RWPE1 (cell line): ENCODE measurements at regions of chr7 and their contacts with region 1.

Region 1: GRCh38 chr7:151123822-151124464 is 37.7 kb downstream of the AGAP3 start:
- DNase-seq: peak; percentile 72
- H3K27ac ChIP-seq: peak overlapping the region; percentile 23; the same call in 1 of the 2 replicates
- CTCF ChIP-seq: peak; percentile 99

Region 2: DNA sequence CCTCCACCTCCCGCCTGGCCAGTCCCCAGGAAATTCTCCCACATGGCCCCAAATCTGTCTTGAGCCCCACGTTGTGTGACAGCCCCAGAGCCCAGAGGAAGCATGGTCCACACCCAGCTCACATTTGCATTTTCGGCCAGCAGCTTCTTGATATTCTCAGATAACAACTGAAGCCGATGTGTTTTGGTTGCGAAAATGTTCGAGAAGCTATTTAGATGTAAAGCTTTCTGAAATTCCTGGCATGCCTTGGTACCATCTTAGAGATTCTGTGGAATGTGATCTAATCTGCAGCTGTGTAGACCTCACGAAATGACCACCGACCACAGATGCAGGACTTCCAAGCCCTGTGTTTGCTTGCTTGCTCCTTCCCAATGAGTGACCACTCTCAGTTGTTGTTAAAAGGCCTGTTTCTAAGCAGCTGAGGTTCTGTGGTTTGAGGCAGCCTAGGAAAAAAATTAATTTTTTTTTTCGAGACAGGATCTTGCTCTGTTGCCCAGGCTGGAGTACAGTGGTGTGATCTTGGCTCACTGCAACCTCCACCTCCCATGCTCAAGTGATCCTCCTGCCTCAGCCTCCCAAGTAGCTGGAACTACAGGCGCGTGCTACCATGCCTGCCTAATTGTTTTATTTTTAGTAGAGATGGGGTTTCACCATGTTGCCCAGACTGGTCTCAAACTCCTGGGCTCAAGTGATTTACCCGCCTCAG is 55.7 kb before region 1 on chr7:
- CTCF ChIA-PET with region 1: no interaction called
- POLR2A ChIA-PET with region 1: no interaction called
- DNase-seq: no peak
- H3K27ac ChIP-seq: 0 out of 2 replicates have a peak overlapping the region, but pooled peaks have one; percentile 5
- CTCF ChIP-seq: no peak

Region 3: GRCh38 chr7:151244196-151244840 is 120.4 kb after region 1 on chr7:
- CTCF ChIA-PET with region 1: interaction called, 11 read pairs
- POLR2A ChIA-PET with region 1: no interaction called
- DNase-seq: no peak
- H3K27ac ChIP-seq: no peak overlapping the region
- CTCF ChIP-seq: peak; percentile 90